Right lobe of liver (tissue), 6 donors: ENCODE measurements at regions of chr7 and their contacts with region 1.

Region 1: DNA sequence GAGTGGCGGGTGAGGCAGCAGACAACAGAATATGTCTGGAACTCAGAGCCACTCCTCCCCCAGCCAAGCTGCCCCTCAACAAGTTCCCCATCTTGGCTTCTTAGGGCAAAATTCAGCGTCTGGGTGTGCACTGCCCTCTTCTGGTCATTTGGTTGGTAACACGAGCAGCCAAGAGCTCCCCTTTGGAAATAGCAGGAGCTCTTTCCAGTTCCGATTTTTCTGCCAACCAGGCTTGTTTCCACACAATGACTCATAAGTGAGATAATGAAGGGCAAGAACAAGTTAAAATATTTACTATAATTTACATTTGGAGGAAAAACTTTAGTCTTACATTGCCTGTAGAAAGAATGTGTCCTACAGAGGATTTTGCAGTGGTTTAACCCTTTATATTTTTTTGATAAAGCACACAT is 70.5 kb downstream of the ADCYAP1R1 start:
- DNase-seq: peak in 2 of 3 donors; percentile 35 to 64
- ATAC-seq: peak; percentile 89 to 99 (median 92)
- H3K4me3 ChIP-seq: no peak overlapping the region
- H3K27ac ChIP-seq: no peak overlapping the region
- H3K4me1 ChIP-seq: peaks cover 0 to 3% (median 0%) of the 10 kb centered on the region in 4 donors
- H3K27me3 ChIP-seq: no peaks in the 10 kb centered on the region
- CTCF ChIP-seq: peak; percentile 80 to 92 (median 90)
- POLR2A ChIP-seq: no peak

Region 2: DNA sequence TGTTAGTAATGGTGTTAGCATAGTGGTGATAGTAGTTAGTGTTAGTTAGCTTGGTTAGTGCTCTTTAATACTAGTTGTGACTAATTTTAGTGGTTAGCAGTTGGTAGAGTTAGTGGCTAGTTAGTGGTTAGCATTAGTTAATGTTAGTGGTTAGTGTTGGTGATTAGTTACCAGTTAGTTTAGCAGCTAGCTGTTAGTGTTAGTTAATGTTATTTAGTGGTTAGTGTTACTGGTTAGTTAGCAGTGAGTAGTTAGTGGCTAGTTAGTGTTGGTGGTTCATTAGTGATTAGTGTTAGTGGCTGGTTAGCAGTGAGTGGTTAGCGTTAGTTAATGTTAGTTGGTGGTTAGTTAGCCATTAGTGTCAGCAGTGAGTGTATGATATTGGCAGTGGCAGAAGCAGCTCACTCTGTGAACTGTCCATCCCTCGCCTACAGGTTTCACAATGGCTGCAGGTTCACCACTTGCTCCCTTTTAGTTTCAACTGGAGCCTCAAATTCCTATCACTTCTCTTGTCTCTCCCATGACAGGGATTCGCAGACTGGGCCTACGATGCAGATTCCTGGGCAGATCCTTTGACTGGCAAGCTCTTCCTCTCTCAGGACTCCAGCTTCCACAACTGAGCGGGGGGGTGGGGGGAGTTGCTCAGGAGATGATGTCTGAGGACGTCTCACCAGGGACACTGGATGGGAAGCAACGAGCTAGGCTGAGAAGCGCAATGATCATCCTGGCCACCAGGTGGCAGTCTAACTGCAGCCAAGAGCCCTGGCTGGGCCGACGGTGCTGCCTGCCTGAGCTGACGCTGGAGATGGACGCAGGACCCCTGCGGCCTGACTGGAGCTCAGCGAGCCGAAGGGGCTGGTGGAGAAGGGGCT is 139.4 kb before region 1 on chr7:
- intact Hi-C with region 1: loop called (anchors 5 kb)
- DNase-seq: peak; percentile 77 to 80 (median 78)
- ATAC-seq: peak; percentile 91 to 97 (median 94)
- H3K4me3 ChIP-seq: no peak overlapping the region
- H3K27ac ChIP-seq: no peak overlapping the region
- H3K4me1 ChIP-seq: no peaks in the 10 kb centered on the region
- H3K27me3 ChIP-seq: no peaks in the 10 kb centered on the region
- CTCF ChIP-seq: peak; percentile 82 to 97 (median 94)
- POLR2A ChIP-seq: no peak